ENCODE measurements at regions of chr1 and their contacts with region 1.

Region 1: DNA sequence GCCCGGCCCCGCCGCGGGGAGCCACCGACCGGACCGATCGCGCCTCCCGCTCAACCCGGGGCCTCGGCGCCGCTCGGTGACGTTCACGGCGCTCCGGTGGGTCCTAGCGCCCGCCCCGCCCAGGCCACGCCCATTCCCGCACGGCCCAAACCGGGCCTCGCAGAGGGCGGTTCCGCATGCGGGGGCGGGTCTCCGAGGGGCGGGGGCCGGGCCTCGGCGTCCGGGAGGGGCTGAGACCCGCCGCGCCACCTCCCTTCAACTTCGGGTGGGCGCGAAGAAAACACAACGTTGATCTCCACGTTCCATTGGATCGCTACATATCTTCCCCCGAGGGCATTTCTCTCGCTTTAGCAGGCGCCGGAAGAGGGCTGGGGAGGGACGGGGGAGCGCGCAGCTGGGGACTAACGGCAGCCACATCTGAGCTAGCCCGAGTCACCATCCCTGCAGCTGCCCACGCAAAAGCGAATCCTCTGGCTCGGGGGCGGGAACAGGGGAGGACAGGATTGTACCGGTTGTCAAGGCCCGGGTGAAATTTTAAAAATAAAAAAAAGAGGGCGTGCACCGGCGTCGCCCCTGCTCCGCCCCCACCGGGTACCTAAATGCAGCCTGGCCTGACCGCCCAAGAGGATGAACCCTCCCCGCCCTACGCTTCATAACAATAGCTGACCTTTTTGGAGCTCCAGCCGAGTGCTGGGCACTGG is at the start of gene MAD2L2:
- DNase-seq: peak; percentile 90
- H3K4me3 Mint-ChIP-seq: peak within 1 kb of the TSS; percentile 87
- H3K27ac Mint-ChIP-seq: peak within 1 kb of the TSS; percentile 91
- H3K4me1 Mint-ChIP-seq: peaks cover 18% of the 10 kb centered on the region
- H3K27me3 Mint-ChIP-seq: peaks cover 13% of the 10 kb centered on the region
- total RNA-seq, gene MAD2L2: 76.9 and 81.8 TPM in 2 replicates

Region 2: DNA sequence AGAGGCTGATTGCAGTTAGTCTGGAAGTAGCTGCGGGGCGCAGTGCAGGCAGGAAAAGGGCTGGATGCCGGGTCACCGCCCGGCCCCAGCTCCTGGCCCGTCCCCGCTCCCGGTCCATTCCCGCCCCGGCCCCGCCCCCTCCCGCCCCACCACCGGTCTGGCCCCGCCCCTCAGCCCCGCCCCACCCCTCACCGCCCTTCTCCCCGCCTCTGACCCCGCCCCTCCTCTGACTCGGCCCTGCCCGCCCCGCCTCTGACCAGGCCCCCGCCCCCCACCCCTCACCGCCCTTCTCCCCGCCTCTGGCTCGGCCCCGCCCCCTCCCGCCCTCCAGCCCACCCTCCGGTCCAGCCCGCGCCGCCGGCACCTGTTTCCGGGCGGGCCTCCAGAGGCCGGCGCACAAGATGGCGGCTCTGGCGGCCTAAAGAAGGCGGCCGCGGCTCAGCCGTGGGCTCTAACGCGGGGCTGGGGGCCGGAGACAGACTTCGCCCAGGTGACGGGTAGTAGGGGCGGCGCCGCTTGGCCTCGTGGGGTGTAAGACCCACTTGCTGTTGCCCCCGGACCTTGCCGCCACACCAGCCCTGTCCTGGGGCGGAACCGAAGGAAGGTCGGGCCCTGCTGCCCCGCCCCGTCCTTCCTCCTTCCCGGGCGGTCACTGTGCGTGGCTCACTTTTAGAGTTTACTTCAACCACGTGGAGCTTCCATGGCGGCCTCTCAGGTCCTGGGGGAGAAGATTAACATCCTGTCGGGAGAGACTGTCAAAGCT is 408.2 kb before region 1 on chr1 and contains the start of gene UBIAD1:
- intact Hi-C with region 1: loop called (anchors 1 kb)
- DNase-seq: peak; percentile 75
- H3K4me3 Mint-ChIP-seq: peak within 1 kb of the TSS; percentile 98
- H3K27ac Mint-ChIP-seq: peak within 1 kb of the TSS; percentile 95
- H3K4me1 Mint-ChIP-seq: peaks cover 25% of the 10 kb centered on the region
- H3K27me3 Mint-ChIP-seq: peaks cover 2% of the 10 kb centered on the region
- total RNA-seq, gene UBIAD1: 30.5 and 33.1 TPM in 2 replicates

Region 3: DNA sequence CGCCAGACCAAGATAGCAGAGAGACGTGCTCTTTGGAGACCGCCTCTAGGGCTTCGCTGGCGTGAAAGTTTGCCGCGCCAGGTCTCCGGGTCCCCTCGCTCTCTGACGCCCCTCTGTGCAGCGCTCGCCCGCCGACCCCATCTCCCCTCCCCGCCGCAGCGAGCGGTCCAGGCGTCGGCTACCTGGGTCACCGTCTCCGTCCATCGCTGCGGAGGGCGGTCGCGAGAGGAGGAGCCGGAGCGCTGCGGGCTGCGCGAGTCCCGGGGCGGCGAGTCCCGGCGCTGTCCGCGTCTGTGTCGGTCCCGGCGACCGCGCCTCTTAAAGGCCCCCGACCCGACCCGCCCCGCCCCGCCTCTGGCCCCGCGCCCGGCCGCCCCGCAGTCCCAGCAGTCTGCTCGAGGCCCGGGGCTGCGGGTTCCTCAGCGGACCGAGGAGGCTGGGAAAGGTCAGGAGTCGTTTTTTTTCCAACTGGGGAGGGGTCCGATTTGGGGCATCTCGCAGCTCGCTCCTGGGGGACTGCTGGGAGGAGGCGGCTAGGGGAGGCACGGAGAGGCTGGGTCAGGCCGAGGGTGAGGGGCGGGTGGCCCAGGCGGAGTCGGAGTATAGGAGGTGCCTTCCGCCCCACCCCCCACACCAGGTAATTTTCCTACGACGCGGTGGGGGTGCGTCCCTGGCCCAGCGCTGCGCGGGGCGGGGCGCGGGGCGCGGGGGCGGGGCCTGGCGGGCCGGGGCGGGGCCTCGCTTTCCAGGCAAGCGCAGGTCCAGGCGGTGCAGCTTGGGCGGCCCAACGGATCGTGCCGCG is 26.9 kb before region 1 on chr1 and contains the starts of genes FBXO2 and FBXO44:
- intact Hi-C with region 1: loop called (anchors 1 kb)
- DNase-seq: peak; percentile 41
- H3K4me3 Mint-ChIP-seq: peak within 1 kb of the TSS; percentile 77
- H3K27ac Mint-ChIP-seq: no peak within 1 kb of the TSS
- H3K4me1 Mint-ChIP-seq: peaks cover 23% of the 10 kb centered on the region
- H3K27me3 Mint-ChIP-seq: peaks cover 17% of the 10 kb centered on the region
- total RNA-seq, gene FBXO2: 0.60 and 0.93 TPM in 2 replicates
- total RNA-seq, gene FBXO44: 22.0 and 24.2 TPM in 2 replicates

Region 4: GRCh38 chr1:11661103-11661502 is 20.1 kb before region 1 on chr1:
- intact Hi-C with region 1: loop called (anchors 1 kb)
- DNase-seq: no peak
- H3K4me3 Mint-ChIP-seq: no peak overlapping the region
- H3K27ac Mint-ChIP-seq: no peak overlapping the region
- H3K4me1 Mint-ChIP-seq: no peaks in the 10 kb centered on the region
- H3K27me3 Mint-ChIP-seq: no peaks in the 10 kb centered on the region

Region 5: GRCh38 chr1:11719313-11720032 is 38.3 kb after region 1 on chr1:
- intact Hi-C with region 1: loop called (anchors 1 kb)
- DNase-seq: peak; percentile 72
- H3K4me3 Mint-ChIP-seq: peak overlapping the region; percentile 81
- H3K27ac Mint-ChIP-seq: peak overlapping the region; percentile 78
- H3K4me1 Mint-ChIP-seq: peaks cover 16% of the 10 kb centered on the region
- H3K27me3 Mint-ChIP-seq: peaks cover 6% of the 10 kb centered on the region

Region 6: GRCh38 chr1:11735854-11736745 is 54.9 kb after region 1 on chr1 and contains the start of gene AGTRAP:
- intact Hi-C with region 1: loop called (anchors 2 kb)
- DNase-seq: peak; percentile 84
- H3K4me3 Mint-ChIP-seq: peak within 1 kb of the TSS; percentile 96
- H3K27ac Mint-ChIP-seq: peak within 1 kb of the TSS; percentile 88
- H3K4me1 Mint-ChIP-seq: peaks cover 67% of the 10 kb centered on the region
- H3K27me3 Mint-ChIP-seq: no peaks in the 10 kb centered on the region
- total RNA-seq, gene AGTRAP: 13.8 and 15.9 TPM in 2 replicates

Measured in activated T-helper 1 cell treated with anti-CD3 and anti-CD28 coated beads, Interleukin-12 subunit alpha, Interleukin-12 subunit beta, Interleukin-2, Interleukin-4 antibody, amounts not matched to agents 30 ng/mL and 10 ng/mL and 1 ng/mL, durations not matched to agents 14 hours and 24 hours and 36 hours (primary cell).